PC-9 (cell line): ENCODE measurements at regions of chr5 and their contacts with region 1.

Region 1: DNA sequence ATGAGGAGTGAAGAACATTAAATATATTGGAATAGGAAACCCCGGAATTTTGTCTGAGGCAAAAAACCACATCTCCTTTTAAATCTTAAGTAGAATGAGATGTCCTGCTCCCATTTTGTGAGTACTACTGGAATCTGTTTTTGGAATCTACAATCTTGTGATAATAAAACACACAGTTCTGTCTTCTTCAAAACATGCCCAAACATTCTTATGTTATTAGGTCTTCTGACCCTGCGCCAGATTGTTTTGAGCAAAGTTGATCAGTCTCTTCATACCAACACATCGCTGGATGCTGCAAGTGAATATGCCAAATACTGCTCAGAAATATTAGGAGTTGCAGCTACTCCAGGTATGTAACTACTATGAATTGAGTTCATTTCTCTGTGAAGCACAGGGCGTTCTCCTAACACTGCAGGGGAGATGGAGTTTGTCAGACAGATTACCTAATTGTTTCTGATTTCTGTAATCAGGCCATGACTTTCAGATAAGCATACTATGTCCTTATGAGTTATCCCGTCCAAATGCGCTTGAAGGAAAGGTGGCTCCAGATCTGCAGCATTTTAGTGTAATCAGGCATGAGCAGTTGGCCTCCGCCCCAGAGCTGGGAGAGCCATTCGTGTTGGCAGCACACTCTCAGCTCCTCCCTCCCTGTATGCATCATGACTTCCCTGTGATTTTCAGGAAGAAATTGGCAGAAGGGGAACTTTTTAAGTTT is 88.0 kb downstream of the NLN start:
- DNase-seq: peak; percentile 89 to 99
- H3K4me3 ChIP-seq: peak overlapping the region; percentile 21
- H3K27ac ChIP-seq: peak overlapping the region; percentile 99
- H3K4me1 ChIP-seq: peaks cover 80% of the 10 kb centered on the region
- H3K27me3 ChIP-seq: no peaks in the 10 kb centered on the region
- CTCF ChIP-seq: no peak

Region 2: GRCh38 chr5:65699338-65699737 is 110.6 kb before region 1 on chr5:
- CTCF ChIA-PET with region 1: no interaction called
- POLR2A ChIA-PET with region 1: no interaction called
- intact Hi-C with region 1: no loop called
- DNase-seq: no peak
- H3K4me3 ChIP-seq: no peak overlapping the region
- H3K27ac ChIP-seq: no peak overlapping the region
- H3K4me1 ChIP-seq: no peaks in the 10 kb centered on the region
- H3K27me3 ChIP-seq: no peaks in the 10 kb centered on the region
- CTCF ChIP-seq: no peak

Region 3: DNA sequence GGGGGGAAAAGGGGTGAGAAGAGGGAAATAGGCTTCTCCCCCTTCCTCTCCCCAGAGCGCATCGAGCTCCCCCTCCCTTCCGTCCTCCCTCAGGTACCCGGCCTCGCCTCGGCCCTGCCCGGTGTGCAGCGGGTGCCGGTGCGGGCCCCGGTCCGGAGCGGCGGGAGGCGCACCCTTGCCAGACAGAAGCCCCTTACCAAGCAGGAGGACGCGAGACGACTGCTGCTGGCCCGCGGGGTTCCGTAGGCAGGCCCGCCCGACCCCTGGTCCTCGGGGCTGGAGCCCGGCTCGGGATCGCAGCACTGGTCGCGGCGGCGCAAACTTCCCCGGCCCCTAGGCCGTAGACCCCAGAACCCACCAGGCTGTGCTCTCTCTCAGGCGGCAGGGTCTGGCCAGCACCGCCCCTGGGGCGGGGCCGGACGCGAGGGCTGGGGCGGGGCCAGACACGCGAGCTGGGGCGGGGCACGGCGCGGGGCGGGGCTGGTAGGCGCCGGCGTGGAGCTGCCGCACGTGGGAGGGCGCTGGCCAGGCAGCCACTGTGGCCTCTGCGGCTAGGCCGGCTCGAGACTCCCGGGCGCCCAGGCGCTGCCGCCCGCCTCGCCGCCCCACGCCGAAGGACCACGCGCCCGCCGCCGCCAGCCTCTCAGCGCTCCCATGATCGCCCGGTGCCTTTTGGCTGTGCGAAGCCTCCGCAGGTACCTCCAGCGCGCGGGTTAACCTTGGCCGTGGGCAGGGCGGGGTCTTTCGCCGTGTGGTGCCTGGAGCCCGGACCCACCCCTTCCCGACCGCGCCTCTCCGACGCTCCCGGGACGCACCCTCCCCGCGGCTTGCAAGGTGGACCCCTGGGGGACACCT is 88.0 kb before region 1 on chr5 and contains the starts of genes NLN and SGTB:
- CTCF ChIA-PET with region 1: no interaction called
- POLR2A ChIA-PET with region 1: no interaction called
- intact Hi-C with region 1: loop called (anchors 5 kb)
- DNase-seq: peak; percentile 44 to 86
- H3K4me3 ChIP-seq: peak within 1 kb of the TSS; percentile 61
- H3K27ac ChIP-seq: peak within 1 kb of the TSS; percentile 48
- H3K4me1 ChIP-seq: peaks cover 26% of the 10 kb centered on the region
- H3K27me3 ChIP-seq: no peaks in the 10 kb centered on the region
- CTCF ChIP-seq: no peak
- total RNA-seq, gene NLN: 56.7 and 74.7 TPM in 2 replicates
- total RNA-seq, gene SGTB: 8.8 and 9.8 TPM in 2 replicates

Region 4: DNA sequence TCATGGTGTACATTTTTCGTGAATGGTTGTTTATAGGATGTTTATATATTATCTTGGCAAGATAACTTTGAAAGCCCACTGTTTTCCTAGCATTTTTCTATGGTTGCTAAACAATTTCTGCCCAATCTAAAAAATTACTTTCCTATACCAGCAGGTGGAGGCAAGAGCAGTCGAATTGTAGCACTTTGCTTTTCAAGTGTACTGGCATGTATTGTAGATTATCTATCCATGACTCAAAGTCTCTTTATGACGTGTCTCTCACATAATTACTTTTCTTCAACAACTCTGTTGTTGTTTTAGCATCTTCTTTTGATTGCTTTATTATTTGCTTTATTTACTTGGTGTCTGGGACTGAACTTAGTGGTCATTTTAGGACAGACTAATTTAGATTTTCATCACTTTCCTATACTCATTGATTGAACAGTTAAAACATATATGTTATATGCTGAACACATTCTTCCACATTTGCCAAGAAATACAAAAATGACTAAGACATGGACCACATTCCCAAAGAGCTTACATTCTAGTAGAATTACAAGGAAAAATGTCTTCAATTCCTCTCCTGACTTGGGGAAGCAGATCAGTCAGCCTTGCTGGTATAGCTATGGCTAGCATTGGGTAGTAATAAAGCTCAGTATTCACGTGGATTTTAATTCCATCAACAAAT is 67.3 kb before region 1 on chr5:
- CTCF ChIA-PET with region 1: no interaction called
- POLR2A ChIA-PET with region 1: no interaction called
- intact Hi-C with region 1: loop called (anchors 5 kb)
- DNase-seq: peak; percentile 12 to 62
- H3K4me3 ChIP-seq: no peak overlapping the region
- H3K27ac ChIP-seq: no peak overlapping the region; the same call in 1 of the 2 replicates
- H3K4me1 ChIP-seq: peaks cover 5% of the 10 kb centered on the region
- H3K27me3 ChIP-seq: no peaks in the 10 kb centered on the region
- CTCF ChIP-seq: peak; percentile 86

Region 5: DNA sequence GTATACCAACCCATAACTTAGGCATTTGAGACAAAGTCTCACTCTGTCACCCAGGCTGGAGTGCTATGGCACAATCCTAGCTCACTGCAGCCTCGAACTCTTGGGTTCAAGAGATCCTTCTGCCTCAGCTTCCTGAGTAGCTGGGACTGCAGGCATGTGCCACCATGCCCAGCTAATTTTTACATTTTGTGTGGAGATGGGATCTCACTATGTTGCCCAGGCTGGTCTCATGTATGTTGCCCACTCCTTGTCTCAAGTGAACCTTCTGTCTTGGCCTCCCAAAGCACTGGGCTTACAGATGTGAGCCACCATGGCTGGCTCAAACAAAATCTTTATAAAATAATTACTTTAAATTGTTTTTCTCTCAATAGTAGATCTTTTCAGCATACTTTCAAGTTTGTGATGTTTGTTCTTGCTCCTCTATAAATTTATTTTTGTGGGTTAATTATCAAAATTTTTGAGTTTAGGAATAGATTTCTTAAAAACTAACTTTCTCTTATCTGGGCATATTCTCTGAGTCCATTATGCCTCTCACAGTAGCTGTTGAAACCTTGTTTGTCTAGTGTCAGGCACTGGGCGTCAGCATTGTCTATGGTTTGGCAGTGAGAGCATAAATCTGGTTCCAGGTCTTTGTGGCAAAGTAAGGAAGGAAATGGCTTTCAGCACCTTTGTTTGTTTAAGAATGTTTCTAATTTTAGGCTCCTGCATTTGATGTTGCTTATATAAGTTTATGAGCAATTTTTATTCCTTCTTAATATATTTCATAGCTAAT is 49.3 kb before region 1 on chr5:
- CTCF ChIA-PET with region 1: no interaction called
- POLR2A ChIA-PET with region 1: interaction called, 6 read pairs
- intact Hi-C with region 1: loop called (anchors 5 kb)
- DNase-seq: peak; percentile 36 to 41
- H3K4me3 ChIP-seq: no peak overlapping the region
- H3K27ac ChIP-seq: no peak overlapping the region
- H3K4me1 ChIP-seq: no peaks in the 10 kb centered on the region
- H3K27me3 ChIP-seq: no peaks in the 10 kb centered on the region
- CTCF ChIP-seq: no peak; the same call in 1 of the 2 replicates

Region 6: DNA sequence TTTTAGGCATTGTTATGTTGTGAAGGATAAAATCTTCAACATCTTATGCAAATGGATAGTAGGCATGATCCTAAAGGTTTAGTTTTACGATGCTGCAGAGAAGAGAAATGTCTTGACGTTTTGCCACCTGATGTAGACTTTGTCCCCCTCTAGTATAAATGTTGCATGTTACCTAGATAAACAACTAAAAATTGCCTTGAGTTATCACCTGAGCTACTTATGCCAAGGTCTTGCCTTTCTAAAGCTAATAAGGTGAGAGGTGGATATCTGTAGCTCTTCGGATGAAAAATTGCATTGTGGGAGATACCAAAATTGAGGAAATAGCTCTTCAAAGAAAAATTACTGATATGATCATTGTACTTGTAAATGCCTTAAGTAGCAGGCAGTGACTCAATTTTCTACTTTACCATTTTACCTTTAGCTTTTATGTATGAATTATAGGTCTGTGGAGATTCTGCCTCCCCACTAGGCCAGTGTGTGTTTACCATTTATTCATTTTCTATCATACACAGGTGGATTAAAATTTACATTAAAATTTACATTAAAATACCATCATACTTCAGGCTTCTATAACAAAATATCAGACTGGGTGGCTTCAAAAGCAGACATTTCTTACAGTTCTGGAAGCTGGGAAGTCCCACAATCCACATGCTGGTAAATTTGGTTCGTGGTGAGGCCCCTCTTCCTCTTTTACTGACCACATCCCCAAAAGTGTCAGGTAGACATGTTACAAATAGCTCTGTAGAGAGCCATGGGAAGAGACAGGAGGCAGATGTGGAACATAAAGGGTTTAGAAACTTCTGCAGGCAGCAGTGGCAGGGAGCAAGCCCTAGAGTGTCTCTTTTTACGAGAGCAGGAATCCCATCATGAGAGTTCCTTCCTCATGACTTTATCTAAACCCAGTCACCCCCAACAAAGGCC is 15.7 kb after region 1 on chr5:
- CTCF ChIA-PET with region 1: no interaction called
- POLR2A ChIA-PET with region 1: interaction called, 16 read pairs
- intact Hi-C with region 1: loop called (anchors 1 kb)
- DNase-seq: no peak
- H3K4me3 ChIP-seq: no peak overlapping the region
- H3K27ac ChIP-seq: peak overlapping the region; percentile 15; the same call in 1 of the 2 replicates
- H3K4me1 ChIP-seq: peaks cover 32% of the 10 kb centered on the region
- H3K27me3 ChIP-seq: no peaks in the 10 kb centered on the region
- CTCF ChIP-seq: no peak

Region 7: DNA sequence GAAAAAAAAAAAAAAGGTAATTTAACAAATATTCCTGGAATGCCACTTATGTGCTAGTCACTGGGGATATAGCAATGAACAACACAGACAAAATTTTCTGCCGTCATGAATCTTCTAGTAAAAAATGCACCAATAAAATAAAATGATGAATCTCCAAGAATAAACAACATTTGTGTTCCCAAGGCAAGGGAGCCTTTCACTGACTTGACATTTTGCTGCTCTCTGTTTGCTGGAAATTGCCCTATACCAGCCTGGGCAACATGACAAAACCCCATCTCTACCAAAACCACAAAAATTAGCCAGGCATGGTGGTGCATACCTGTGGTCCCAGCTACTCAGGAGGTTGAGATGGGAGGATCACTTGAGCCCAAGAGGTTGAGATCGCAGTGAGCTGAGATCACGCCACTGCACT is 51.9 kb after region 1 on chr5:
- CTCF ChIA-PET with region 1: interaction called, 5 read pairs
- POLR2A ChIA-PET with region 1: interaction called, 39 read pairs
- intact Hi-C with region 1: loop called (anchors 1 kb)
- DNase-seq: peak; percentile 85 to 96
- H3K4me3 ChIP-seq: no peak overlapping the region
- H3K27ac ChIP-seq: peak overlapping the region; percentile 97
- H3K4me1 ChIP-seq: peaks cover 37% of the 10 kb centered on the region
- H3K27me3 ChIP-seq: no peaks in the 10 kb centered on the region
- CTCF ChIP-seq: no peak

Region 8: DNA sequence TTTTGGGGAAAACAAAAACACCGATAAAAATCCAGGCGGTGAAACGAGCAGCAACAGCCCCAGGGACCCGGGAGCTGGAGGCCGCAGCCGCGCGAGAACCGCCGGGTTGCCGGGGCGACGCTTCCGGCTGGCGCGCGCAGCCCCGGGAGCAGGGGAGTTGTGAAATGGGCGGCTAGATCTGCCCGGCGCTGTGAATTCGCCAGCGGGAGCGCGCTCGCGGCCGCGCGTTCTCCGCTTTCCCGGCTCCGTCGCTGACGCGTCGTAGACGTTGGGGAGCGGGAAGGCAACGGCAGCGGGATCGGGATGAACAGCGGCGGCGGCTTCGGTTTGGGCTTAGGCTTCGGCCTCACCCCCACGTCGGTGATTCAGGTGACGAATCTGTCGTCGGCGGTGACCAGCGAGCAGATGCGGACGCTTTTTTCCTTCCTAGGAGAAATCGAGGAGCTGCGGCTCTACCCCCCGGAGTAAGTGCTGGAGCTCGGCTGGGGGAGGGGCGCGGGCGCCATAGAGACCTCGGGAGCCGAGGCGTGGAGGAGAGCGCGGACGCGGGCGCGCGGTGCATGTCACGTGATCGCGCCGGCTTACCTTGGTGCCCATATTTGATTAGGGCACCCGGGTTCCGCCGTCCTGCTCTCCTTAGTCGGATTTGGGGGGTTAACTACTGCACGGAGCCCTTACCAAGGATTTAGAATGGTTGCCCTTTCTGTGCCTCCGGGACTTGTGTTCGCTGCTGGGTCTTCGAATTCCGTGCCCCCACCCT is 334.3 kb after region 1 on chr5 and contains the start of gene SREK1:
- CTCF ChIA-PET with region 1: no interaction called
- POLR2A ChIA-PET with region 1: no interaction called
- intact Hi-C with region 1: loop called (anchors 5 kb)
- DNase-seq: peak; percentile 82 to 92
- H3K4me3 ChIP-seq: peak within 1 kb of the TSS; percentile 97
- H3K27ac ChIP-seq: peak within 1 kb of the TSS; percentile 84
- H3K4me1 ChIP-seq: peaks cover 31% of the 10 kb centered on the region
- H3K27me3 ChIP-seq: no peaks in the 10 kb centered on the region
- CTCF ChIP-seq: no peak
- total RNA-seq, gene SREK1: 73.8 and 82.8 TPM in 2 replicates

Region 9: DNA sequence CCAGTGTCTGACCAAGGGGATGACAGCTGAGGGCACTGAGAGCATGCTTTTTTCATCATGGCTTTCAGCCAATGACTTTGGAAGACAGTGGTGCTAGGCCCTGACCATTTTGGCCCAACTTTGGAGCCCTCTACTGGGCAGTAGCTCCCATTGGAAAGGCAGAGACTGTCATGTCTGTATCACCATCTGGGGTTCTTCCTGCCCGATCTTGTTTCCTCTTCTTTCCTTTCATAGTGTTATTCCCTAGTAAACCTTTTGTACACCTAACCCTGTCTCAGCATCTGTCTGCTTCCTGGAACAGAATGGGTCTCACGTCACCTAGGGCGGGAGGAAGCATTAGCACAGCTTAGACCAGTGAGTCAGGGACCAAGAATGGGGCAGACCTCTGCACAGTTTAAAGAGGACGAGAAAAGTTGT is 688.8 kb after region 1 on chr5:
- CTCF ChIA-PET with region 1: no interaction called
- POLR2A ChIA-PET with region 1: no interaction called
- intact Hi-C with region 1: no loop called
- DNase-seq: no peak
- H3K4me3 ChIP-seq: no peak overlapping the region
- H3K27ac ChIP-seq: no peak overlapping the region
- H3K4me1 ChIP-seq: no peaks in the 10 kb centered on the region
- H3K27me3 ChIP-seq: no peaks in the 10 kb centered on the region; the same call in 1 of the 2 replicates
- CTCF ChIP-seq: no peak